ENCODE measurements at regions of chr6 and their contacts with region 1.

Region 1: DNA sequence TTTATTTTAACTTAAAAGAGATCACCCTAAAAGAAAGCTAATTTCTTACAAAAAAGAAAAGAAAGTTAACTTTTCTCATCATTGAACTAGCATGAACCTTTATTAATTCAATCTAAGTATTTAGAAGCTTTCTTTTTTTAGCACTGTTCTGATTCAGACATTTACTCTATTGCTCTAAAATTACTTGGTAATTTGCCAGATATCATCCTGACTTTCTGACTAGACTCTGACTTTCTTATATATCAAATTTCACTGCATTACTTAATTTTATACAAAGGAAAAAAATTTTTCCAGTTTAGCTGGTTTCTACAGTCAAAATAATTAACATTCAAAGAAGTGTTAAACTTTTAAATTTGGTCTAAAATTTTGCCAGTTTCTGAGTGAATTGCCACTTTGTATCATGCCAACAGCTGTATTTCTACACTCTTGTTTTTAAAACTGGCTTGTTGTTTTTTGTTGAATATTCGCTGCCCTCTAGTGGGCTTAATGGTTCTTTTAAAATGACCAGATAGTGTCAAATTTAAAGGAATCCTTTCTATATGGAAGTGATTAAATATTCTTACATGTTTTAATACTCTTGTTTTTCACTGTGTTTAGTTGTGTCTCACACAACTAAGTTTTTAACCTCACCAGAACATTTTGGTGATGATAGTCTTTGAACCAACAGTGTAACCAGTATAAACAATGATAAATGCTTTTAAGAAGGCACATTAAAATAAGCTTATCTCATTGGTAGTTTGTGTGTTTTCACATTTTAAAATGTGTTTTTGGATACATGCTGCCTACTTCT is 102.0 kb downstream of the POPDC3 start:
- DNase-seq: peak; percentile 44
- ATAC-seq: peak; percentile 58
- H3K4me3 ChIP-seq: no peak overlapping the region
- H3K27ac ChIP-seq: no peak overlapping the region
- H3K4me1 ChIP-seq: peaks cover 2% of the 10 kb centered on the region in 2 experiments; a peak in 3 of 4 replicates
- H3K27me3 ChIP-seq: no peaks in the 10 kb centered on the region
- CTCF ChIP-seq: peak; percentile 37 to 78 (median 75); a peak in 5 of 6 replicates
- POLR2A ChIP-seq: no peak
- RAD21 ChIP-seq: peak; percentile 78

Region 2: GRCh38 chr6:104682722-104683643 is 394.8 kb before region 1 on chr6:
- CTCF ChIA-PET with region 1: interaction called, 10 read pairs
- POLR2A ChIA-PET with region 1: no interaction called
- RAD21 ChIA-PET with region 1: no interaction called
- intact Hi-C with region 1: loop called (anchors 2 kb)
- DNase-seq: peak; percentile 53
- ATAC-seq: peak; percentile 95
- H3K4me3 ChIP-seq: no peak overlapping the region
- H3K27ac ChIP-seq: no peak overlapping the region
- H3K4me1 ChIP-seq: no peaks in the 10 kb centered on the region; a peak in 1 of 4 replicates
- H3K27me3 ChIP-seq: no peaks in the 10 kb centered on the region
- CTCF ChIP-seq: peak; percentile 69 to 96 (median 92); a peak in 5 of 6 replicates
- POLR2A ChIP-seq: no peak
- RAD21 ChIP-seq: peak; percentile 81

Region 3: DNA sequence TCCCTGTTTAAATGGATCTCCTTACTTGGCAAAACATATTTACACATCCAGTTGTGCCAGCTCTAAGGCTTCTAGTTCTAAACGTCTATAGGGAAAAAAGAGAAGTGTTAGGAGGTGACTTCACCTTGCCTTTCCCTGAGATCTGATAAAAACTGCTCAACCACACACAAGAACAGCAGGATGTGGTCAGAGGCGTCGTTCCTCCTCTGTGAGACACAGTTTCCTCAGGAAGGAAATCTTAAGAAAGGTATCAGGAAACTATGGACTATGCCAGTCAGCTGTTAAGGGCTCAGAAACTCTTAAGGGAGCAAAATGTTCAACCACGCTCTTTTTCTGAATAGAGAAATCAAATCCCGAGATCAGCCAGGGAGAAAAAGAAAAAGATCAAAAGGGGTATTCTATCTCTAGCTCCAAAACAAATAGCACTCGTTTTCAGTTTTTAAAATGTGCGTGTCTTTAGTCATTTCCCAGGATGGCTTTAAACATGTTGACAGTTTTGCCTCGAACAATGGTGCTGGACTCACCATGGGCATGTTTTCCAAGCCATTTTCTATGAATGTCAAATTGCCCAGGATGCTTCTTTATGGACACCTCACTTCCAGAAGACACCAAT is 372.6 kb before region 1 on chr6:
- CTCF ChIA-PET with region 1: no interaction called
- POLR2A ChIA-PET with region 1: no interaction called
- RAD21 ChIA-PET with region 1: no interaction called
- intact Hi-C with region 1: no loop called
- DNase-seq: no peak
- ATAC-seq: no peak
- H3K4me3 ChIP-seq: no peak overlapping the region
- H3K27ac ChIP-seq: no peak overlapping the region
- H3K4me1 ChIP-seq: no peaks in the 10 kb centered on the region
- H3K27me3 ChIP-seq: no peaks in the 10 kb centered on the region
- CTCF ChIP-seq: no peak
- POLR2A ChIP-seq: no peak
- RAD21 ChIP-seq: no peak

Region 4: DNA sequence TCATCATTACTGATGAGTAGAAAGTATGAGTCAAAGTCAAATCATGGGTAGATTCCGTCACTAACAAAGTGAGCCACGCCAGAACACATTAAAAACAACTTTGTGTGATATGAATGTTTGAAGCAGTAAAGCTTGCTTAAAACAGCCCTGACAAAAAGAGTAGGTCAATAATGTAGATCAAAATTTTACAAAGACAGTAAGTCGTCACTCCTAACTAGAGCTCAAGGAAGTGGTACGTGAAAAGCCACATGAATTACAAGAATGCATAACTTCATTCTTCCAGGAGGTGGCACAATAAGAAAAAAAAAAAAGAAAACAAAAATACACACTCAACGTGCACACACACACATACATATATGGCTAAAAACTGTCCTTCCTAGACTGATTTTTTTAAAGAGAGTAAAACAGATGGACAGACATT is 288.0 kb before region 1 on chr6:
- CTCF ChIA-PET with region 1: interaction called, 67 read pairs
- POLR2A ChIA-PET with region 1: no interaction called
- RAD21 ChIA-PET with region 1: interaction called, 6 read pairs
- intact Hi-C with region 1: loop called (anchors 1 kb)
- DNase-seq: peak; percentile 50
- ATAC-seq: peak; percentile 81
- H3K4me3 ChIP-seq: no peak overlapping the region
- H3K27ac ChIP-seq: no peak overlapping the region
- H3K4me1 ChIP-seq: peaks cover 8% of the 10 kb centered on the region in 2 experiments; a peak in 3 of 4 replicates
- H3K27me3 ChIP-seq: no peaks in the 10 kb centered on the region
- CTCF ChIP-seq: peak; percentile 26 to 49 (median 33); a peak in 4 of 6 replicates
- POLR2A ChIP-seq: no peak
- RAD21 ChIP-seq: peak; percentile 57

Region 5: GRCh38 chr6:104896914-104897313 is 180.9 kb before region 1 on chr6:
- CTCF ChIA-PET with region 1: interaction called, 10 read pairs
- POLR2A ChIA-PET with region 1: no interaction called
- RAD21 ChIA-PET with region 1: no interaction called
- intact Hi-C with region 1: loop called (anchors 2 kb)
- DNase-seq: no peak
- ATAC-seq: peak; percentile 66
- H3K4me3 ChIP-seq: no peak overlapping the region
- H3K27ac ChIP-seq: no peak overlapping the region
- H3K4me1 ChIP-seq: peaks cover 0 to 13% of the 10 kb centered on the region in 2 experiments; a peak in 2 of 4 replicates
- H3K27me3 ChIP-seq: no peaks in the 10 kb centered on the region
- CTCF ChIP-seq: peak; percentile 17 to 39 (median 36); a peak in 5 of 6 replicates
- POLR2A ChIP-seq: no peak
- RAD21 ChIP-seq: peak; percentile 35; the same call in 1 of the 2 replicates

Region 6: GRCh38 chr6:104995989-104996617 is 81.7 kb before region 1 on chr6:
- CTCF ChIA-PET with region 1: interaction called, 25 read pairs
- POLR2A ChIA-PET with region 1: no interaction called
- RAD21 ChIA-PET with region 1: no interaction called
- intact Hi-C with region 1: loop called (anchors 2 kb)
- DNase-seq: no peak
- ATAC-seq: no peak
- H3K4me3 ChIP-seq: no peak overlapping the region
- H3K27ac ChIP-seq: no peak overlapping the region
- H3K4me1 ChIP-seq: no peaks in the 10 kb centered on the region
- H3K27me3 ChIP-seq: no peaks in the 10 kb centered on the region
- CTCF ChIP-seq: peak in 2 of 3 experiments; percentile 15 to 27; a peak in 2 of 6 replicates
- POLR2A ChIP-seq: no peak
- RAD21 ChIP-seq: peak; percentile 51

Measured in HCT116 (cell line).